OCI-LY7 (cell line): ENCODE measurements at regions of chr6 and their contacts with region 1.

Region 1: GRCh38 chr6:132391391-132392271 is 9.6 kb downstream of the MOXD1 start:
- DNase-seq: no peak
- H3K4me3 ChIP-seq: no peak overlapping the region
- H3K27ac ChIP-seq: no peak overlapping the region
- H3K4me1 ChIP-seq: peaks cover 24% of the 10 kb centered on the region
- CTCF ChIP-seq: no peak

Region 2: GRCh38 chr6:132096245-132096644 is 295.4 kb before region 1 on chr6:
- CTCF ChIA-PET with region 1: no interaction called
- POLR2A ChIA-PET with region 1: no interaction called
- intact Hi-C with region 1: no loop called
- DNase-seq: no peak
- H3K4me3 ChIP-seq: no peak overlapping the region
- H3K27ac ChIP-seq: no peak overlapping the region
- H3K4me1 ChIP-seq: no peaks in the 10 kb centered on the region
- CTCF ChIP-seq: no peak

Region 3: DNA sequence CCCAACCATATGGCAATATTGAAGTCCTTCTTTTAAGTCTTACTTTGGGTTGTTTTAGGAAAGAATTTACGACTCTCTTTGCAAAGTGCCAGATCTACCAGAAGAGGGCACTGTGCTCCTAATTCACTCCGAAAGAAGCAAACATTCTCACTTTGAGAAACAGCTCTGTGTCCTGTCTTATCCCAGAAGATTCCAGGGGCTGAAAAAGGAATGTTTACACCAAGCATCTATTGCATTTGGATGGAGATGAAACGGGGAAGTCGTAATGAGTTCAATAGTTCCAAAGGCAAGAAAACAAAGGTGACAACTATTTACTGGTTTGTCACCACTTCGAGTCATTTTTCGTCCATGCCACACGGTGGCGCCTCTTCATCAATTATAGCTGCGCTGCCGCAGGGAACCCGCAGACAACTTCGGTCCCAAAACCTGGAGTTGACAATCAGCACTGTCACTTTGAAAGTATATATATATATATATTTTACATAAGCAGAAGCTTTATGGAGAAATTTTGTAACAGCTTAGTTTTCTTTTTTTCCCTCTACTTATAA is 112.0 kb before region 1 on chr6:
- CTCF ChIA-PET with region 1: interaction called, 4 read pairs
- POLR2A ChIA-PET with region 1: interaction called, 3 read pairs
- intact Hi-C with region 1: loop called (anchors 1 kb)
- DNase-seq: peak; percentile 88
- H3K4me3 ChIP-seq: peak overlapping the region; percentile 63
- H3K27ac ChIP-seq: peak overlapping the region; percentile 22
- H3K4me1 ChIP-seq: peaks cover 20% of the 10 kb centered on the region
- CTCF ChIP-seq: peak; percentile 100

Region 4: GRCh38 chr6:132354512-132355167 is 37.0 kb before region 1 on chr6:
- CTCF ChIA-PET with region 1: no interaction called
- POLR2A ChIA-PET with region 1: interaction called, 14 read pairs
- intact Hi-C with region 1: no loop called
- DNase-seq: peak; percentile 93
- H3K4me3 ChIP-seq: peak overlapping the region; percentile 25
- H3K27ac ChIP-seq: peak overlapping the region; percentile 55
- H3K4me1 ChIP-seq: peaks cover 53% of the 10 kb centered on the region
- CTCF ChIP-seq: peak; percentile 50